ENCODE measurements at regions of chr5 and their contacts with region 1.

Region 1: GRCh38 chr5:74576941-74577456 is 63.5 kb downstream of the ENC1 start:
- DNase-seq: peak; percentile 30
- H3K4me3 Mint-ChIP-seq: no peak overlapping the region
- H3K27ac Mint-ChIP-seq: peak overlapping the region; percentile 54
- H3K4me1 Mint-ChIP-seq: peaks cover 51% of the 10 kb centered on the region
- H3K27me3 Mint-ChIP-seq: peaks cover 5% of the 10 kb centered on the region

Region 2: DNA sequence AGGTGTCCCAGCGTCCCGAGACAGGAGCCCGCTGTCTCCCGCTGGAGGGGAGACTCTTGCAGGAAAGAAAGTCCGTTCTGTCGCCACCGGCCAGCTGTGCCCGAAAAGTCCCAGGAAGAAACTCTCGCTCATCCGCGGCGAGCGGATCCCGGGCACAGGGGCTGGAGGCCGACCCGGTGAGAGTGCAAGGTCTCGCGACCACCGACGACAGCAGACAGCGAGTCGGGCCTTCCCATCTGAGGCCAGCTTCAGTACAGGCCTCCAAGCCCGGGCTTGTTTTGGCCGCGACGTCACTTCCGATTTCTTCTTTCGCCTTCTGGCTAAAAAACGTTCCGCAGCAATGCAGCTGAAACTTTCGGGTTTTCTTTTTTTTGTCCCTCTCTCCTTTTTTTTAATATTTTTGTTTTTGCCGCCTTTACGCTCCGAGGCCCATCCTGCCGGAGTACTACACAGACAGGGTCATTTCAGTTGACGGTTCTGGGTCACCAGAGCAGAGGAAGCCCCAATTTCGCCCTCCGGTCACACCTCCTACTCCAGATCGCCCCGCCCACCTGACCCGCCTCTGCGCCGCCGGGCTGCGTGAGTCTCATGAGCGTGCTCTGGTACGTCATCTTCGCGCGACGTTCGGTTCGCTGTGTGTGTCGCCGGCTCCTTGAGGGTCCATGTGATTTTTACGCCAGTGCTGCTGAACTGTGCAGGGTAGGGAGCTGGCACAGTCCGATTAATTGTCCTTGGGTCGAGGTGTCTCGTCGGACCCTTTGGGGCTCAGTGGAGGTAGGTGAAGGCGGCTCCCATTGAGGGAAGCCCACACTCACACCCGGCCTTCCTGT is 1011.6 kb before region 1 on chr5 and contains the starts of genes ANKRA2 and UTP15:
- CTCF ChIA-PET with region 1: no interaction called
- POLR2A ChIA-PET with region 1: no interaction called
- intact Hi-C with region 1: loop called (anchors 10 kb)
- DNase-seq: peak; percentile 99
- H3K4me3 Mint-ChIP-seq: peak within 1 kb of the TSS; percentile 92
- H3K27ac Mint-ChIP-seq: peak within 1 kb of the TSS; percentile 92
- H3K4me1 Mint-ChIP-seq: peaks cover 33% of the 10 kb centered on the region
- H3K27me3 Mint-ChIP-seq: no peaks in the 10 kb centered on the region
- total RNA-seq, gene ANKRA2: 19.1 to 21.0 TPM
- total RNA-seq, gene UTP15: 29.7 to 33.1 TPM

Region 3: GRCh38 chr5:74326571-74327338 is 250.2 kb before region 1 on chr5:
- CTCF ChIA-PET with region 1: no interaction called
- POLR2A ChIA-PET with region 1: no interaction called
- intact Hi-C with region 1: loop called (anchors 1 kb)
- DNase-seq: peak; percentile 81
- H3K4me3 Mint-ChIP-seq: no peak overlapping the region
- H3K27ac Mint-ChIP-seq: no peak overlapping the region
- H3K4me1 Mint-ChIP-seq: peaks cover 17% of the 10 kb centered on the region
- H3K27me3 Mint-ChIP-seq: peaks cover 18% of the 10 kb centered on the region

Region 4: GRCh38 chr5:74640450-74640953 is 63.5 kb after region 1 on chr5 and contains the start of gene ENC1:
- CTCF ChIA-PET with region 1: interaction called, 6 read pairs
- POLR2A ChIA-PET with region 1: no interaction called
- intact Hi-C with region 1: loop called (anchors 1 kb)
- DNase-seq: peak; percentile 80
- H3K4me3 Mint-ChIP-seq: peak within 1 kb of the TSS; percentile 75
- H3K27ac Mint-ChIP-seq: no peak within 1 kb of the TSS
- H3K4me1 Mint-ChIP-seq: peaks cover 30% of the 10 kb centered on the region
- H3K27me3 Mint-ChIP-seq: peaks cover 33% of the 10 kb centered on the region
- total RNA-seq, gene ENC1: 0.29 to 0.44 TPM

Region 5: DNA sequence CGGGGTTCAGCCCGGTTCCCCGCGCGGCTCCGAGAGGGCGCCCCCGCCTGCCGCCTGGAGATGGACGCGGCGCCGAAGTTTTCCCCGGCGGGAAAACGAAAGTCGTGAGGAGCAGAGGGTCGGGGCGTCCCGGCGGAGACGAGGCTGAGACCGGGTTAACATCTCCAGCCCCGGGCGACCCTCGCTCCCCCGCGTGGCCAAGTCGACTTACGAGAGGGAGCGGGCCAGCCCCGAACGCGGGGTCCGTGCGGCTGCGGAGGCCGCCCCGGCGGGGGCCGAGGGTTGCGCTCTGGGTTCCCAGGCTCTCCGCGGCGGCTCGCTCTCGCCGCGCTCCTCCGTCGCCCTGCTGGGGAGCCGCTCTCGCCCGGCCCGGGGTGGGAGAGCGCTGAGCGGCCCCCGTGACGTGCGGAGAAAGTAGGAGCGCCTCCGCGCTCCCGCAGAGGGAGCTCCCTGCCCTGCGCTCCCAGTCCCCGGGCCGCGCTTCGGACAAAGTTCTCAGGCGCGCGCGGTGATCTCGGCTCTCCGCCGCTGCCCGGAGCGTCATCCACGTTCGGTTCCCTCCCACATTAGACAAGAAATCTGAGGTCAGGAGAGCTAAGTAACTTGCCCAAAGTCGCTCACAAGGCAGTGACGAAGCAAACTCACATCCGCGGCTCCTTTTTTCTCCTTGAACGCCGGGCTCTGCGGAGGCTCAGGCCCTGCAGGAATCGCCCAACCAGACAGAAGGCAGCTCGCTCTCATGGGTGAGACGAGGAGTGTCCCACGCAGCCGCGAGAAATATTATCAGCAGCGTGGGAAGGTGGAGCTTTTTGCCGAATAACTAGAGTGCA is 476.5 kb after region 1 on chr5:
- CTCF ChIA-PET with region 1: no interaction called
- POLR2A ChIA-PET with region 1: no interaction called
- intact Hi-C with region 1: loop called (anchors 5 kb)
- DNase-seq: peak; percentile 71
- H3K4me3 Mint-ChIP-seq: peak overlapping the region; percentile 81
- H3K27ac Mint-ChIP-seq: peak overlapping the region; percentile 84
- H3K4me1 Mint-ChIP-seq: peaks cover 80% of the 10 kb centered on the region
- H3K27me3 Mint-ChIP-seq: peaks cover 4% of the 10 kb centered on the region

Region 6: GRCh38 chr5:76473661-76474060 is 1896.7 kb after region 1 on chr5:
- CTCF ChIA-PET with region 1: no interaction called
- POLR2A ChIA-PET with region 1: no interaction called
- intact Hi-C with region 1: loop called (anchors 5 kb)
- DNase-seq: peak; percentile 87
- H3K4me3 Mint-ChIP-seq: peak overlapping the region; percentile 22
- H3K27ac Mint-ChIP-seq: peak overlapping the region; percentile 82
- H3K4me1 Mint-ChIP-seq: peaks cover 85% of the 10 kb centered on the region
- H3K27me3 Mint-ChIP-seq: no peaks in the 10 kb centered on the region